Gastrocnemius medialis (tissue), 4 donors: ENCODE measurements at regions of chr20 and their contacts with region 1.

Region 1: GRCh38 chr20:62367136-62367632 is at the start of gene LAMA5:
- DNase-seq: peak in 1 of 2 donors; percentile 20
- ATAC-seq: peak; percentile 14 to 26
- H3K4me3 ChIP-seq: peak within 1 kb of the TSS; percentile 56 to 66 (median 60)
- H3K27ac ChIP-seq: peak within 1 kb of the TSS; percentile 87 to 90 (median 90)
- H3K4me1 ChIP-seq: peaks cover 53 to 72% of the 10 kb centered on the region in 2 donors
- H3K27me3 ChIP-seq: no peaks in the 10 kb centered on the region
- CTCF ChIP-seq: no peak
- POLR2A ChIP-seq: peak; percentile 59 to 80
- total RNA-seq, gene LAMA5: 13.0 to 35.8 (median 22.7) TPM

Region 2: DNA sequence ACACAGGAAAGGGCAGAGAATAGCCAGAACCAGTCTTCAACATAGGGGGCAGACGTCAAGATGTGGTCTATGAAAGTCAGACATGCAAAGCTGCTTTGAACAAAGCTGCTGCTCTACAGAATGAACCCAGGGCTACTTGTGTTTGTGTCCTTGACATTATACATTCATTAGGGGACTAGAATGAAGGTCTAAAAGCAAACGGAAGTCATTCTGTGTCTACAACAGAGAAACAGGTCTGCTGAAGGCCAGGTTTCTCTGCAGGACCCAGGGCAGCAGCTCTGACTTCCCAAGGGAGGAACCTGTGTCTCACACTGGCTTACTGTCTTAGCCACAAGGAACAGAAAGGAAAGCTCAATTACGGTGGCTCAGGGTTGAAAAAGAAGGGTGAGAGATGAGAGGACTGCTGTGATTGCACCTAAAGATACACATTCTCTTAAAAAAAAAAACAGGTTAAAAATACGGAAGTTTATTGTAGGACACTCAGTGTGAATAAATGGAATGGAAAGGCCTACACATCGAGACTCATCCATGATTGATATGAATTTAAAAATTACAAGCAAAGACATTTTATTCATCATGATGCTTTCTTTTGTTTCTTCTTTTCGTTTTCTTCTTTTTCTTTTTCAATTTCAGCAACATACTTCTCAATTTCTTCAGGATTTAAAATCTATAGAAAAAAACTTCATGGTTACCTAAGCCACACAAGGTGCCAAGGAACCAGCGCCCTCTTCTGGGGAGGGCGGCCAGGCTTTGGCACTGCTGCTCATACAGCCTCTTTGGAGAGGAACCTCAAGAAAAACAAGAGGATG is 230.7 kb before region 1 on chr20:
- in situ Hi-C with region 1: no loop called
- intact Hi-C with region 1: no loop called
- DNase-seq: peak in 1 of 2 donors; percentile 66
- ATAC-seq: no peak
- H3K4me3 ChIP-seq: no peak overlapping the region
- H3K27ac ChIP-seq: peak overlapping the region; percentile 91 to 96 (median 95)
- H3K4me1 ChIP-seq: peaks cover 41 to 52% of the 10 kb centered on the region in 2 donors
- H3K27me3 ChIP-seq: no peaks in the 10 kb centered on the region
- CTCF ChIP-seq: peak; percentile 60 to 81 (median 77)
- POLR2A ChIP-seq: no peak

Region 3: GRCh38 chr20:62305149-62305764 is 61.9 kb before region 1 on chr20:
- in situ Hi-C with region 1: no loop called
- intact Hi-C with region 1: no loop called
- DNase-seq: peak in 1 of 2 donors; percentile 56
- ATAC-seq: no peak
- H3K4me3 ChIP-seq: peak overlapping the region in 3 of 4 donors; percentile 61 to 96 (median 62)
- H3K27ac ChIP-seq: peak overlapping the region; percentile 90 to 100 (median 98)
- H3K4me1 ChIP-seq: peaks cover 31 to 53% of the 10 kb centered on the region in 2 donors
- H3K27me3 ChIP-seq: no peaks in the 10 kb centered on the region
- CTCF ChIP-seq: no peak
- POLR2A ChIP-seq: no peak

Region 4: GRCh38 chr20:62352402-62353288 is 14.5 kb before region 1 on chr20:
- in situ Hi-C with region 1: no loop called
- intact Hi-C with region 1: loop called (anchors 2 kb)
- DNase-seq: peak; percentile 80 to 98
- ATAC-seq: peak; percentile 83 to 85
- H3K4me3 ChIP-seq: peak overlapping the region in 3 of 4 donors; percentile 22 to 34 (median 31)
- H3K27ac ChIP-seq: peak overlapping the region; percentile 66 to 80 (median 76)
- H3K4me1 ChIP-seq: peaks cover 48 to 52% of the 10 kb centered on the region in 2 donors
- H3K27me3 ChIP-seq: no peaks in the 10 kb centered on the region
- CTCF ChIP-seq: peak in 4 of 5 experiments; percentile 18 to 46 (median 31)
- POLR2A ChIP-seq: no peak